AG04450 (cell line): ENCODE measurements at regions of chr3 and their contacts with region 1.

Region 1: DNA sequence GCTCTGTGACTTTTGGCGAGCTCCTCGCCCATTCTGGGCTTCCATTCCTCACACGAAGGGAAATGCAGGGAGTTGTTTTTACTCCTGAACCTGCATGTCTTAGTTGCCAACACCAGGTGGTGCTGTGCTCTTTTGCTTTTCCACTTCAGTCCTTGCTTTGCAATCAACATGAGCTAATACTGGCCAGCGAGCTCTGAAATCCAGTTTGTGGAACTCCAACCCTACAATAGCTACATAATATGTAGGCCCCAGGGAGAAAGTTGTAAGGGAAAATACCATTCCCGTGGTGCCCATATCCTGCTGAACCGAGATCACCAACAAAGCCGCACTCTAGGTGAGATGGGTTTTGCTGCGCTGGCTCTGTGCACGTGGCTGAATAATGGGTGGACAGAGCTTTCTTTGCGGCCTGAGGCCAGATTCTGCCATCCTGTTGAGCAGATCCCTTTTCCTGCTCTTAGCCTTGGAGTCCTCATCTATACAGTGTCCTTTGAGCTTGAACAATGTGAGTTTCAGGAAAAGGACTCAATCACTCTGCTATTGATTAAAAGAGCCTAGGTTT is 25.0 kb downstream of the LSM3 start:
- DNase-seq: peak; percentile 77
- H3K4me3 ChIP-seq: no peak overlapping the region
- H3K27ac ChIP-seq: no peak overlapping the region
- H3K27me3 ChIP-seq: no peaks in the 10 kb centered on the region
- CTCF ChIP-seq: peak; percentile 91

Region 2: DNA sequence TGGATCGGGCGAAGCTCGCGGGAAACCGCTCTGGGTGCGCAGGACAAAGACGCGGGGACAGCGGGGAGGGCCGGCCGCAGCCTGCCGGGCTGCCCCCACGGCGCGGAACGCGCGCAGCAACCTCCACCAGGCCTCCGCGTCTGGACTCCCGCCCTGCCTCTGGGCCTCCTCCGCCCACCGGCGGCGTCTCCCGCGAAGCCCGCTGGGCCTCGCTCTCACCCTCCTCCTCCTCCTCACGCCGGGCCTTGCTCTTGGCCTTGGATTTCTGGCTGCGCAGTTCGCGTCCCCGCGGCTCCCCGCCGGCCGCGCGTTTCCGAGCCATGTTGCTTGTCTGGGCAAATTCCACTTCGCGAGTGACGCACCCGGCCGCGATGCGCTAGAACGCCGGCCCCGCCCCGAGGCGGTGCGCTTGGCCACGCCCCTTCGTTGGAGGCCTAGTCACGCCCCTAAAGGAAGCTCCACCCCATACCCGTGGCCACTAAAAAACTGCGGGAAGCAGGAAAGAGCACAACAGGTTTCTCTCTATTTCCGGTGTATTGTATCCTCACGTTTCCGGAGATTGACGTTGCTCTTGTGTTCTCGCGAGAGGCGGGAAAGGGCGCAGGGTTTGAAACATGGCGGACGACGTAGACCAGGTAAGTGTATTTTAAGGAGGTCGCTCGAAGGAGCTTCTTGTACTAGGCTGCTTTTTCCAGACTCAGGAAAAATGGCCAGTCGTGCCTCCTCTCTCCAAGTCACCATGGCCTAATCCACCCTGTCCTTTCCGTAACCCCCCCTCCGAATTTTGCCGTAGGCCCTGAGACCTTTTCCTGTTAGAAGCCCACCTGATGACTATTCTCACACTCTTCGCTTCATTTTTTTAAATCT is 25.1 kb before region 1 on chr3 and contains the starts of genes LSM3 and XPC:
- CTCF ChIA-PET with region 1: interaction called, 31 read pairs
- POLR2A ChIA-PET with region 1: interaction called, 9 read pairs
- DNase-seq: peak; percentile 98
- H3K4me3 ChIP-seq: peak within 1 kb of the TSS; percentile 98
- H3K27ac ChIP-seq: peak within 1 kb of the TSS; percentile 94
- H3K27me3 ChIP-seq: no peaks in the 10 kb centered on the region
- CTCF ChIP-seq: no peak
- polyA plus RNA-seq, gene LSM3: 7.4 and 11.9 TPM in 2 replicates
- polyA plus RNA-seq, gene XPC: 38.4 and 39.0 TPM in 2 replicates

Region 3: DNA sequence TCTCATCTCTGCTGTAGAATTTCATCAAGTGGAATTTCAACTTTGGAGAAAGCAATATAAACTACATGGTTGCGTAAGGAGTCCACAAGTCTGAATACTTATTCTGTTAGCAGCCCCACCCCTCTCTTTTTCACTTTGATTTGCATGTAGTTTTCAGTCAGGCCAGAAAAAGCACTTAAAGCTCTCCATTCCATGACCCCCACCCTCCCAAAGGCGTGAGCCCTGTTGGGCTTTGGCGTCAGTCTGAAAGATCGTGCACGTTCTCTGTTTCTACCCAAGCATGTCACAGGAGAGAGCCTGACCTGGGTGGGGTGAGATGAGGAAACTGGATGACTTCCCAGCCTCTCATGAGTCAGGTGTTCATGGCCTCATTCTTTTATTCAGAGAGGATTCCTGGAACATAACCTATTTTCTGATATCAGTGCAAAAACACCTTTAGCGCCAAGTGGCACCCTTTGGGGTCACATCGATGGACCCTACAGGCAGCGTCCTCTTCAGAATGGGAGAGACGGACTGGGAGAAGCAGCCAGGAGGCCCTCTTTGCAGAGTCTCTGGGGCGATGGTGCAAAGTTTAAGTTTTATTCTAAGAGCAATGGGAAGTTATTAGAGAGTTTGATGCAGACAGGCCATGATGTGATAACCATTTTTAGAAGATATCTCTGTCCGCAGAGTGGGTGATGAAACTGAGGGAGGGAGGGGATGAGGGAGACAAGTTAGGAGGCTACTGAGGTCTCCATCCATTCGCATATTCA is 30.8 kb after region 1 on chr3:
- CTCF ChIA-PET with region 1: interaction called, 42 read pairs
- POLR2A ChIA-PET with region 1: no interaction called
- DNase-seq: no peak
- H3K4me3 ChIP-seq: no peak overlapping the region
- H3K27ac ChIP-seq: peak overlapping the region; percentile 31
- H3K27me3 ChIP-seq: no peaks in the 10 kb centered on the region
- CTCF ChIP-seq: no peak

Region 4: DNA sequence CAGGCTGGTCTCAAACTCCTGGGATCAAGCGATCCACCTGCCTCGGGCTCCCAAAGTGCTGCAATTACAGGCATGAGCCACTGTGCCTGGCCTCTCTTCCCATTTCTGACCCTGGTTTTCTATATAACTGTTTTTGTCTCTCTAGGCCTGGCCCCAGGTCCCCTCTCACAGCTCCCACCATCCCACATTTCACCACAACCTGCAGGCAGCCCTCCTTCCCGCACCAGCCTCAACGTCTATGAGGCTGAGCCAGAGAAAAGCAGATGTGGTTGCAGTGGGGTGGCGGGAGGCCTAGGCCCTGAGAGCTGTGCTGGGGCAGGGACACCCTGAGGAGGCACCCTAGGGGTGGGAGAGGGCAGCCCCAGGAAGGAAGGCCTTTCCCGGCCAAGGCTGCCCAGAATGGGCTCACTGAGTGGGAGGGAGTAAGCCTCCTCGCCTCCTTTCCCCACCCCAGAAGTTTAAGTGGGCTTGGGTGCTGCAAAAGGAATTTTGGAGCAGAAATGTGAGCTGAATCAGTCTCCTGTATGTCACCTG is 74.7 kb after region 1 on chr3:
- CTCF ChIA-PET with region 1: interaction called, 13 read pairs
- POLR2A ChIA-PET with region 1: no interaction called
- DNase-seq: no peak
- H3K4me3 ChIP-seq: no peak overlapping the region
- H3K27ac ChIP-seq: no peak overlapping the region
- H3K27me3 ChIP-seq: peaks cover 12% of the 10 kb centered on the region
- CTCF ChIP-seq: no peak

Region 5: GRCh38 chr3:14426063-14426620 is 222.5 kb after region 1 on chr3:
- CTCF ChIA-PET with region 1: interaction called, 14 read pairs
- POLR2A ChIA-PET with region 1: no interaction called
- DNase-seq: no peak
- H3K4me3 ChIP-seq: no peak overlapping the region
- H3K27ac ChIP-seq: no peak overlapping the region
- H3K27me3 ChIP-seq: no peaks in the 10 kb centered on the region
- CTCF ChIP-seq: 0 out of 2 replicates have a peak, but pooled peaks have one; percentile 2

Region 6: DNA sequence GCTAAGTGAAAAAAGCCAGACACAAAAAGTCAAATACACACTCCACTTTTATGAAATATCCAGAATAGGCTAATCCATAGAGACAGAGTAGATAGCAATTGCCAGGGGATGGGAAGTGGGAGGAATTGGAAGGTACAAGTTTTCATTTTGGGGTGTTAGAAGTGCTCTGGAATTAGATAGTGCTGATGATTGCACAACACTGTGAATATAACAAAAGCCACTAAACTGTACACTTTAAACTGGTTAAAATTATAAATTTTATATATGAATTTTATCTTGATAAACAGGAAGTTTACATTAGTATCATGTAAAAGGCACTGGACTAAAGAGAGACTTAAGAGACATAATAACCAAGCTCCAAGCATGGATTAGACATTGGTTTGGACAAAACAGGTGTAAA is 297.5 kb after region 1 on chr3:
- CTCF ChIA-PET with region 1: interaction called, 11 read pairs
- POLR2A ChIA-PET with region 1: no interaction called
- DNase-seq: no peak
- H3K4me3 ChIP-seq: no peak overlapping the region
- H3K27ac ChIP-seq: no peak overlapping the region
- H3K27me3 ChIP-seq: peaks cover 14% of the 10 kb centered on the region
- CTCF ChIP-seq: no peak